CD8-positive, alpha-beta memory T cell (primary cell): ENCODE measurements at regions of chrX and their contacts with region 1.

Region 1: GRCh38 chrX:153906126-153906917 is 1.8 kb downstream of the AVPR2 start:
- DNase-seq: peak; percentile 24 to 66 (median 32)
- H3K4me3 ChIP-seq: no peak overlapping the region
- H3K4me3 Mint-ChIP-seq: peak overlapping the region in 5 of 7 donors; percentile 20 to 84 (median 46)
- H3K27ac ChIP-seq: no peak overlapping the region
- H3K27ac Mint-ChIP-seq: peak overlapping the region; percentile 16 to 90 (median 84)
- H3K4me1 ChIP-seq: peaks cover 28% of the 10 kb centered on the region
- H3K4me1 Mint-ChIP-seq: peaks cover 29 to 42% (median 34%) of the 10 kb centered on the region in 3 donors
- H3K27me3 ChIP-seq: no peaks in the 10 kb centered on the region
- H3K27me3 Mint-ChIP-seq: no peaks in the 10 kb centered on the region

Region 2: GRCh38 chrX:153857348-153857903 is 48.9 kb before region 1 on chrX:
- CTCF ChIA-PET with region 1: no interaction called
- POLR2A ChIA-PET with region 1: no interaction called
- DNase-seq: no peak
- H3K4me3 ChIP-seq: no peak overlapping the region
- H3K4me3 Mint-ChIP-seq: peak overlapping the region in 1 of 7 donors; percentile 4
- H3K27ac ChIP-seq: no peak overlapping the region
- H3K27ac Mint-ChIP-seq: peak overlapping the region in 1 of 8 donors; percentile 52
- H3K4me1 ChIP-seq: no peaks in the 10 kb centered on the region
- H3K4me1 Mint-ChIP-seq: peaks cover 5 to 18% (median 11%) of the 10 kb centered on the region in 3 donors
- H3K27me3 ChIP-seq: no peaks in the 10 kb centered on the region
- H3K27me3 Mint-ChIP-seq: peaks cover 5 to 16% of the 10 kb centered on the region in 2 donors

Region 3: DNA sequence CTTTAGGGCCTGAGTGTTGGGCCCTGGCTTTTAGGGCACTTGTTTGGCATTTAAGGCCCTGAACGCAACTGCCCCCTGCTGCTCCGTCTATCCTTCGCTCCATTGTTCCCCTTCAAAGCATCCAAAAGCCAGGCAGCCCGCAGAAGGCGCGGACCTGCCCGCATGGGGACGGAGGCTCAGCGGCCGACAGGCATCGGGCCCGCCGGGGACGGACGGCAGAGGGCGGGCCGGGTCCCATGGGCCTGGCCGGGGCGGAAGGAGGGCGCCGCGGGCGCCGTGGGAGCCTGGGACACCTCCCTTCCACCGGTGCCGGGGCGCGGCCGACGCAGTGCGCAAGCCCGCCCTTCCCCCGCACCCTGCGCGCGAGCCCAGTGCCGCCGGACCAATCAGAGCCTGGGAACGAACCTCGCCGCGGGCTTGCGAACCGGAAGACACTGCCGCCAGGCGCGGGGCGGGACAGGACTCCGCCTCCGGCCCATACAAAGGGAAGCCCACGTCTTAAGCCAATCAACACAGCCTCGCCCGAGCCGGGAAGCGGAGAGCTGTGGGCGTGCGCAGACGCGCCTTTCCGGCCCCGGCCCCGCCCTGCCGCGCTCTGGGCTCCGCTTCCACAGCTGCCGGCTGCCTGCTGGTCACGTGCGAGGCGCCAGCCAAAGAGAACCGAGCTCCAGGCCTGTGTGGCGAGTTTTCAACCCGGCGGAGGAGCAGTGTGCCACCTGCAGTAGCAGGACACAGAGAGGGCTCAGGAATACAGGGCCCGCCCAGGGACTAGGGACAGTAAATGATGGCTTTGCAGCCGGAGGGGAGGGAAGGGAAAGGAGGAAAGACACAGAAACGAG is 21.8 kb after region 1 on chrX:
- CTCF ChIA-PET with region 1: interaction called, 5 read pairs
- POLR2A ChIA-PET with region 1: interaction called, 21 read pairs
- DNase-seq: peak; percentile 86 to 98 (median 96)
- H3K4me3 ChIP-seq: peak overlapping the region; percentile 86
- H3K4me3 Mint-ChIP-seq: peak overlapping the region; percentile 89 to 95 (median 91)
- H3K27ac ChIP-seq: peak overlapping the region; percentile 91
- H3K27ac Mint-ChIP-seq: peak overlapping the region; percentile 91 to 100 (median 99)
- H3K4me1 ChIP-seq: peaks cover 11% of the 10 kb centered on the region
- H3K4me1 Mint-ChIP-seq: peaks cover 43 to 61% (median 46%) of the 10 kb centered on the region in 3 donors
- H3K27me3 ChIP-seq: no peaks in the 10 kb centered on the region
- H3K27me3 Mint-ChIP-seq: no peaks in the 10 kb centered on the region